ENCODE measurements at regions of chr12 and their contacts with region 1.

Region 1: DNA sequence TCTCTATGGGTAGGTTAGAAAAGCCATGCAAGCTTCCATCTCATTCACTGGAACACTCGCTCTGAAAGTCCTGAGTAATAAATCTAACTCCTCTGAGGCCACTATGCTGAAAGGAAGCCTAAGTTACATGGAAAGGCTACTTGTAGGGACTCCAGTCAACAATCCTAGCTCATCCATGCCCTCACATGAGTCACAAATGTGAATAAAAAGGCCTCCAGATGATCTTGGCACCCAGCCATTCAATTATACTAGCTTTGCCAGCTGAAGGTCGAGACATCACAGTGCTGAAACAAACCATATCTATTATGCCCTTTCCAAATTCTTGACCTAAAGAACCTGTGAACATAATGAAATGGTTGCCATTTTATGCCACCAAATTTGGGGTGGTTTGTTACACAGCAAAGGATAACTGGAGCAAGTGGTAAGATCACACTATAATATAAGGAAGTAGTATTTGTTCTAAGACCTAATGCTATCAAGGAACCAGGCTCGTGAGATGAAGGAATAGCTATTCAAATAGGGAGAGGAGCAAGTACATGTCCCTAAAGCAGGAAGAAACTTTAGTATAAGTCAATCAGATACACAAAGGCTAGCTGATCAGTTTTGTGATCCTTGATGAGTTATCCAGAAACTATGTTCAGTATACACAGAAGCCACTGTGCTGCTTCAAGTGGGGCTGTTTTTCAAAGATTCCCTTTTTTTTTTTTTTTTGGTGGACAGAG is 142.1 kb downstream of the MED13L start:
- DNase-seq: peak; percentile 19
- ATAC-seq: no peak
- H3K4me3 Mint-ChIP-seq: no peak overlapping the region
- H3K27ac Mint-ChIP-seq: peak overlapping the region; percentile 91
- H3K4me1 Mint-ChIP-seq: peaks cover 69% of the 10 kb centered on the region
- H3K27me3 Mint-ChIP-seq: no peaks in the 10 kb centered on the region
- CTCF ChIP-seq: no peak

Region 2: GRCh38 chr12:116066381-116067230 is 68.8 kb before region 1 on chr12:
- CTCF ChIA-PET with region 1: interaction called, 4 read pairs
- POLR2A ChIA-PET with region 1: no interaction called
- intact Hi-C with region 1: loop called (anchors 10 kb)
- DNase-seq: peak; percentile 75
- ATAC-seq: peak; percentile 85
- H3K4me3 Mint-ChIP-seq: no peak overlapping the region
- H3K27ac Mint-ChIP-seq: peak overlapping the region; percentile 25
- H3K4me1 Mint-ChIP-seq: peaks cover 29% of the 10 kb centered on the region
- H3K27me3 Mint-ChIP-seq: no peaks in the 10 kb centered on the region
- CTCF ChIP-seq: peak; percentile 82

Region 3: DNA sequence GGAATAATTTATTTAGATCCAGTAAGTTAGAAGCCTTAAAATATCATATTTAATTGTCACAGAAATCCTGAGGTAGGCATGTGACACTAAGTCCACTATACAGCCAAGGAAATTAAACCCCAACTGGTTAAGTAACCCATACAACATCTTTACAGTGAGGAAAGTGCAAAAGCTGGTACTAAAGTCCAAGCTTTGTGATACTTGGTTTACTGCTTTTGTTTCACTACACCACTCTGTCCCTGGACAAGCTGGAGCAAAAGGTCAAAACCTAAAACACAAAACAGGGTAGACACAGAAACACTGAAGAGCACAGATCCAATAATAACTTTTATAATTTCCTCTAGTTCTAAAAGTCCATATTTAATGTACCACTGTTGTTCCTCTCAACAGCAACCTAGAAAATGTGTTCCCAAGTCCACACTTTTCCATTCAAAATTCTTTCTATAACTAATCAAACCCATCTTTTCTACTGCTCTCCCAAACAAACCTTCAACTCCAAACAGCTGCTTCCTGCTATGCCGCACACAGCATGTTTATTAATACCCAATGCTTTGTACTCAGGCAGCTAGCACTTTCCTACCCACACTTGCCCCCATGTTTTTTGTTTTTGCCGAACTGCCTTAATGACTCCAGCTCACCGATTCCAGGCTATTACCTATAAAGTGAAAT is 51.2 kb after region 1 on chr12:
- CTCF ChIA-PET with region 1: no interaction called
- POLR2A ChIA-PET with region 1: no interaction called
- intact Hi-C with region 1: no loop called
- DNase-seq: no peak
- ATAC-seq: no peak
- H3K4me3 Mint-ChIP-seq: no peak overlapping the region
- H3K27ac Mint-ChIP-seq: peak overlapping the region; percentile 47
- H3K4me1 Mint-ChIP-seq: peaks cover 79% of the 10 kb centered on the region
- H3K27me3 Mint-ChIP-seq: no peaks in the 10 kb centered on the region
- CTCF ChIP-seq: no peak